ENCODE measurements at regions of chr2 and their contacts with region 1.

Region 1: GRCh38 chr2:5915881-5916310 is 223.7 kb downstream of the SOX11 start:
- DNase-seq: peak in 1 of 2 experiments; percentile 85
- H3K4me3 ChIP-seq: no peak overlapping the region
- H3K27ac ChIP-seq: no peak overlapping the region
- H3K4me1 ChIP-seq: peaks cover 4 to 12% (median 8%) of the 10 kb centered on the region in 4 experiments; a peak in 6 of 7 replicates
- H3K27me3 ChIP-seq: peaks cover 14 to 29% (median 24%) of the 10 kb centered on the region in 4 experiments
- CTCF ChIP-seq: peak; percentile 52 to 74 (median 61)
- EP300 ChIP-seq: no peak
- POLR2A ChIP-seq: no peak
- RAD21 ChIP-seq: peak; percentile 76 to 83

Region 2: GRCh38 chr2:5932556-5933469 is 16.9 kb after region 1 on chr2:
- CTCF ChIA-PET with region 1: interaction called, 27 read pairs
- POLR2A ChIA-PET with region 1: no interaction called
- DNase-seq: no peak
- H3K4me3 ChIP-seq: no peak overlapping the region
- H3K27ac ChIP-seq: no peak overlapping the region
- H3K4me1 ChIP-seq: no peaks in the 10 kb centered on the region; a peak in 3 of 7 replicates
- H3K27me3 ChIP-seq: no peaks in the 10 kb centered on the region; a peak in 1 of 7 replicates
- CTCF ChIP-seq: no peak
- EP300 ChIP-seq: no peak
- POLR2A ChIP-seq: no peak
- RAD21 ChIP-seq: peak in 1 of 2 experiments; percentile 17; a peak in 1 of 4 replicates

Region 3: GRCh38 chr2:5937851-5938565 is 22.1 kb after region 1 on chr2:
- CTCF ChIA-PET with region 1: interaction called, 27 read pairs
- POLR2A ChIA-PET with region 1: no interaction called
- DNase-seq: no peak
- H3K4me3 ChIP-seq: no peak overlapping the region
- H3K27ac ChIP-seq: no peak overlapping the region
- H3K4me1 ChIP-seq: peaks cover 0 to 8% (median 4%) of the 10 kb centered on the region in 4 experiments; a peak in 5 of 7 replicates
- H3K27me3 ChIP-seq: no peaks in the 10 kb centered on the region; a peak in 1 of 7 replicates
- CTCF ChIP-seq: no peak
- EP300 ChIP-seq: no peak
- POLR2A ChIP-seq: no peak
- RAD21 ChIP-seq: no peak

Region 4: DNA sequence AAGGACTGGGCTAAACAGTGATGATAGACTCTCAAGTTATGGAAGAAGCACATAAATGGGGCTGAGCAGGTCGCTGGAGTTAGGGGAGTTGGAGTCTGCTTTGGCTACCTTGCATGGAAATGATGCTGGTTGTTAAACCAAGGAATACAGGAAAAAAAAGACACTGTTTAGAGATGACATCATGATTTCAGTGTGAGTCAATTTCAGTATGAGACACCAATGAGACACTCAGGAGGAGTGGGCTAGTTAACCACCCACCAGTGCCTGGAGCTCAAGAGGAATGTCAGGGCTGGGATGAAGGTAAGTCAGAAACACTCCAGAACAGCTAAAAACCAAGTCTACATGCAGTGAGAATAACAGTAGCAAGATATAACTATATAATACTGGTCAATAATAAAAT is 79.9 kb after region 1 on chr2:
- CTCF ChIA-PET with region 1: no interaction called
- POLR2A ChIA-PET with region 1: no interaction called
- DNase-seq: no peak
- H3K4me3 ChIP-seq: no peak overlapping the region
- H3K27ac ChIP-seq: no peak overlapping the region
- H3K4me1 ChIP-seq: peaks cover 0 to 3% (median 0%) of the 10 kb centered on the region in 4 experiments; a peak in 2 of 7 replicates
- H3K27me3 ChIP-seq: no peaks in the 10 kb centered on the region
- CTCF ChIP-seq: no peak
- EP300 ChIP-seq: no peak
- POLR2A ChIP-seq: no peak
- RAD21 ChIP-seq: no peak

Region 5: DNA sequence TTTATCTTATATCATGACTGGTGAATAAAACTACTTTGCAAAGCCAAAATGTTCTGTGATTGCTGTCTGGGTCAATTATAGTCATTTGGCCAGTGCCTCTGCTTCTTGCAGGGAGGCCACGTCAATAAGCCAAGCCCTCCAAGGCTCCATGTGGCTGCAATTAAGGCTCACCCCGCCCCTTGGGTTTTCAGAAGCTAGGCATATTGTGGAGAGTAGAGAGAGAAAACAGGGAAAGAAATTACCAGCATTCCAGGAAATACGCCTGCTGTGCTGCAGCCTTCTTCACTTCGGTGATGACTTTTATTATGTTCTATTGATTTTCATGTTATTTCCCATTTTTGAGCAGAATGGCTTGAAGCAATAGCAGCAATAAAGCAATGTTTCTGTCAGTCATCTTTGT is 96.0 kb after region 1 on chr2:
- CTCF ChIA-PET with region 1: no interaction called
- POLR2A ChIA-PET with region 1: no interaction called
- DNase-seq: no peak
- H3K4me3 ChIP-seq: no peak overlapping the region
- H3K27ac ChIP-seq: no peak overlapping the region
- H3K4me1 ChIP-seq: no peaks in the 10 kb centered on the region
- H3K27me3 ChIP-seq: no peaks in the 10 kb centered on the region; a peak in 1 of 7 replicates
- CTCF ChIP-seq: no peak
- EP300 ChIP-seq: no peak
- POLR2A ChIP-seq: no peak
- RAD21 ChIP-seq: no peak

Measured in H1 (cell line).